HEK293T (cell line): ENCODE measurements at regions of chr10 and their contacts with region 1.

Region 1: DNA sequence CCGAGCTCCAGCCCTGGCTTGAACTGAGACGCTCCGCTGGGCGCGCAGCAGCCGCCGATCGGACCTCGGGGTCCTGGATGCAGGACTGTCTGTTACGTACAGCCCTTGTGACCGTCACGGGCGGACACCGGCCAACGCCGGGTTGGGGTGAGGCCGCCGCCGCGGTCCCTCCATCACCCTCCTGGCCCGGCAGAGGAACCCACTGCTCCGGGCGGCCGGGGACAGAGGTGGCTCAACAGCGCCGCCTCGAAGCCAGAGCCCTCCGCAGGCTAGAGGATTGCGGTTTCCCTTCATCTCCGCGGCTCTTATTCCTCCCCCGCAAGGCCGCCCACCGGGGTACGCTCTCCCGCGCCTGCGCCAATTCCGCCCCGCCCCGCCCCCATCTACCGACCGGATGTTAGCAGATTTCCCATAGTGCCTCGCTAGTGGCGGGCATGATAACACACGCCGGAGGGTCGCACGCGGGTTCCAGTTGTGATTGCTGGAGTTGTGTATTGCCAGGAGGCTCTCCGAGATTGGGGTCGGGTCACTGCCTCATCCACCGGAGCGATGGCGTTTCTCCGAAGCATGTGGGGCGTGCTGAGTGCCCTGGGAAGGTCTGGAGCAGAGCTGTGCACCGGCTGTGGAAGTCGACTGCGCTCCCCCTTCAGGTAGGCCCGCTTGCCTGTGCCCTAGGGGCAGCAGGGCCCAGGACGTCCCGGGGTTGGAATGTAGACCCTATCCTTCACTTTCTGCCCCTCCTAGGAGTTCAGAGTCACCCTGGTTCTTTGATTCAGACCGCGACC is at the start of gene TFAM:
- DNase-seq: peak; percentile 92

Region 2: GRCh38 chr10:58268870-58269605 is 116.2 kb before region 1 on chr10 and contains the start of gene CISD1:
- CTCF ChIA-PET with region 1: no interaction called
- POLR2A ChIA-PET with region 1: interaction called, 16 read pairs
- DNase-seq: peak; percentile 96

Region 3: DNA sequence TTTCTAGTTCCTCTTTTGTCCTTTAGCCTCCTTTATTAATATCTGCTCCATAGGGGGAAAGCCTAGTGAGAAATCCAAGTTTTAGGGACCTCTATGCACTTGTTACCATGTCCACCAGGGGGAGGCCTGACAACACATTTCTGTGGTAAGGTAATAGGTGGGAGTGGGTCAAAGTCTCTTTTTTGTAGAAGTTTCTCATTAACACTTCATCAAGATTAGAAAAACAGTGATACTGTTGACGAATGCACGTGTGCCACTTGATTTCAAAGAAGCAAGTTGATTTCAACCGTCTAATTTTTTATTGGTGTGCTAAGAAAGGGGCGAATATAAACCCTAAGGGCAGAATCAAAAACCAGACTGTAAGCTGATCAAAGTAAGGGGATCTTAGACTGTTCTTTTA is 85.6 kb before region 1 on chr10:
- CTCF ChIA-PET with region 1: interaction called, 12 read pairs
- POLR2A ChIA-PET with region 1: interaction called, 19 read pairs
- DNase-seq: peak; percentile 63

Region 4: GRCh38 chr10:58334817-58335305 is 50.3 kb before region 1 on chr10 and contains the start of gene UBE2D1:
- CTCF ChIA-PET with region 1: no interaction called
- POLR2A ChIA-PET with region 1: interaction called, 12 read pairs
- DNase-seq: peak; percentile 88

Region 5: GRCh38 chr10:58593008-58593407 is 207.8 kb after region 1 on chr10:
- CTCF ChIA-PET with region 1: no interaction called
- POLR2A ChIA-PET with region 1: no interaction called
- DNase-seq: no peak